CD4-positive, alpha-beta memory T cell (primary cell): ENCODE measurements at regions of chr9 and their contacts with region 1.

Region 1: GRCh38 chr9:105608721-105609598 is 51.0 kb downstream of the FKTN start:
- DNase-seq: peak in 4 of 5 donors; percentile 24 to 39 (median 34)
- H3K4me3 ChIP-seq: no peak overlapping the region
- H3K4me3 Mint-ChIP-seq: no peak overlapping the region
- H3K27ac ChIP-seq: no peak overlapping the region
- H3K27ac Mint-ChIP-seq: no peak overlapping the region
- H3K4me1 ChIP-seq: no peaks in the 10 kb centered on the region
- H3K4me1 Mint-ChIP-seq: no peaks in the 10 kb centered on the region
- H3K27me3 ChIP-seq: no peaks in the 10 kb centered on the region
- H3K27me3 Mint-ChIP-seq: no peaks in the 10 kb centered on the region

Region 2: DNA sequence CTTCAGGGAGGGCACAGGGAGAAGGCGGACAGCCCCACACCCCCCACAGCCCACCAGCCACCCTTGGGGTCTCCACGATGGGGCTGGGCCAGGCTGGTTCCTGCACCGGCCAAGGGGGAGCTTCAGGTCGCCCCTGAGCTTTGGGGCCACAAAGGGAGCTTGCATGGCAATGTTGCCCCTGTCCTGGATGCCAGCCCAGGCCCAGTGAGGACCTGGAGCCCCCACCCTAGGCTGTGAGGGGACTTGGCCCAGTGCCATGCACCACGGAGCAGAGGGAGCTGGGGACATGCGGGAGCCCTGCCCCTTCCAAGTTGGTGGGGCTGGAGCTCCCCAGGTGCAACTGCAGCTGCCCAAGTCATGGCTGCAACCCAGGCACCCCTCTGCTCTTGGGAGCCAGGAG is 103.8 kb after region 1 on chr9:
- CTCF ChIA-PET with region 1: interaction called, 25 read pairs
- POLR2A ChIA-PET with region 1: no interaction called
- intact Hi-C with region 1: no loop called
- DNase-seq: no peak
- H3K4me3 ChIP-seq: no peak overlapping the region
- H3K4me3 Mint-ChIP-seq: no peak overlapping the region
- H3K27ac ChIP-seq: no peak overlapping the region
- H3K27ac Mint-ChIP-seq: no peak overlapping the region
- H3K4me1 ChIP-seq: no peaks in the 10 kb centered on the region
- H3K4me1 Mint-ChIP-seq: peaks cover 0 to 10% (median 6%) of the 10 kb centered on the region in 4 donors
- H3K27me3 ChIP-seq: no peaks in the 10 kb centered on the region
- H3K27me3 Mint-ChIP-seq: no peaks in the 10 kb centered on the region

Region 3: DNA sequence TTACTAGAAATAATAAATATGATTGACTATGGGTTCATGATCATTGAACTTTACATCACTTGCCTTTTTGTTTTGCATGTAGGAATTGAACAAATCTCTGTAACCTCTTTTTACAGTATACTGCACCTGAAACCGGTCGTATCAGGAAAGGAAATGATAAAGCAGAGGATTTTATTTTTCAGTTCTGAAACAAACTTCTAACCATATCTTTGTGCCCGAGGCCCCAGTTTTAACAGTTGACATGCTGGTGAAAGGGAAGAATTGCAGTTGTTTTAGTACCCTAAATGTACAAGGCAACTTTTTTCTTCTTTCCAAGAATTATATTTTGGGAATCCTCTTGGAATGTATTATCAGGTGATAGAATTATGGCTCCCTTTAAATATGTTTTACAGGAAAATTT is 113.1 kb after region 1 on chr9:
- CTCF ChIA-PET with region 1: interaction called, 25 read pairs
- POLR2A ChIA-PET with region 1: no interaction called
- intact Hi-C with region 1: loop called (anchors 1 kb)
- DNase-seq: no peak
- H3K4me3 ChIP-seq: no peak overlapping the region
- H3K4me3 Mint-ChIP-seq: no peak overlapping the region
- H3K27ac ChIP-seq: no peak overlapping the region
- H3K27ac Mint-ChIP-seq: no peak overlapping the region
- H3K4me1 ChIP-seq: no peaks in the 10 kb centered on the region
- H3K4me1 Mint-ChIP-seq: no peaks in the 10 kb centered on the region
- H3K27me3 ChIP-seq: no peaks in the 10 kb centered on the region
- H3K27me3 Mint-ChIP-seq: no peaks in the 10 kb centered on the region

Region 4: GRCh38 chr9:105881654-105882349 is 272.8 kb after region 1 on chr9:
- CTCF ChIA-PET with region 1: interaction called, 22 read pairs
- POLR2A ChIA-PET with region 1: no interaction called
- intact Hi-C with region 1: loop called (anchors 1 kb)
- DNase-seq: peak; percentile 31 to 48 (median 36)
- H3K4me3 ChIP-seq: no peak overlapping the region
- H3K4me3 Mint-ChIP-seq: no peak overlapping the region
- H3K27ac ChIP-seq: no peak overlapping the region
- H3K27ac Mint-ChIP-seq: no peak overlapping the region
- H3K4me1 ChIP-seq: peaks cover 2% of the 10 kb centered on the region
- H3K4me1 Mint-ChIP-seq: peaks cover 0 to 7% (median 4%) of the 10 kb centered on the region in 4 donors
- H3K27me3 ChIP-seq: no peaks in the 10 kb centered on the region
- H3K27me3 Mint-ChIP-seq: peaks cover 0 to 3% of the 10 kb centered on the region in 2 donors

Region 5: GRCh38 chr9:107172160-107172978 is 1563.4 kb after region 1 on chr9:
- CTCF ChIA-PET with region 1: no interaction called
- POLR2A ChIA-PET with region 1: no interaction called
- intact Hi-C with region 1: loop called (anchors 2 kb)
- DNase-seq: peak; percentile 21 to 52 (median 35)
- H3K4me3 ChIP-seq: no peak overlapping the region
- H3K4me3 Mint-ChIP-seq: no peak overlapping the region
- H3K27ac ChIP-seq: no peak overlapping the region
- H3K27ac Mint-ChIP-seq: no peak overlapping the region
- H3K4me1 ChIP-seq: no peaks in the 10 kb centered on the region
- H3K4me1 Mint-ChIP-seq: peaks cover 0 to 2% (median under 1%) of the 10 kb centered on the region in 4 donors
- H3K27me3 ChIP-seq: no peaks in the 10 kb centered on the region
- H3K27me3 Mint-ChIP-seq: peaks cover 1 to 11% of the 10 kb centered on the region in 2 donors